Naive thymus-derived CD4-positive, alpha-beta T cell (primary cell): ENCODE measurements at regions of chr4 and their contacts with region 1.

Region 1: DNA sequence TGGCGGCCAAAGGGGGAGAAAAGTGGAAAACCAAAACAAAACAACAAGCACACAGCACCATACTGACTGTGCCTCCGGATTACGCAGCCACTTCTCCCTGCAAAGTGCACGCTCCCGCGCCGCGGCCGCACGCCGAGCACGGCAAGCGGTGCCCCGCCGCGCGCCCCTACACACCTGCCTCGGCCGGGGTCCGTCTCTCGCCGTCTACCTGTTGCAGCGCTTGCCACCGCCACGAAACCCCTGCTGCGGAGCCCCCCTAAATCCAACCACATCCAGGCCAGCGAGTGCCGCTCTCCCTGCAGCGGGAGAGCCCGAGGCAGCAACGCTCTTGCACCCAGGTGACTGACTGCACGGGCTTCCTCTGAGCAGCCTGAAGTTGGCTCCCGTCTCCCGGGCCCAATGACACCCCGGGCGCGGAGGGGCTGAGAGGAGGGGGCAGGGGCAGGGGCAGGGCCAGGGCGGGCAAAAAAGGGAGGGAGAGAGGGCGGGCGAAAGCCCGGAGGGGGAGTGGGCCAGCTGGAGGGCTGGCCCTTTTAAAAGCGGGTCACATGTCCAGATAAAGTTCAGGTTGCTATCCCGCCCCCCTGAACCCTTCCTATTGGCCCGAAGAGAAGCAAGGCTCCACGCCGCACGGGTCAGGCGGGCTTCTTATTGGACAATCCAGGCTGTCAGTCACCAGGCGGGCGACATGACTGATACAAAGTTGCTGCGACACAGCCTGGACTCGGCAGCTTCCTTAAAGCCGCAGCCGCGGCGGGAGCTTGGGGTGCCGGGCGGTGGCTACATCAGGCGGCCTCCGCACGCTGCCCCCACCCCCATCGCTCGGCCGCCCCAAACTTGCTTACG is at the start of gene NR3C2:
- DNase-seq: peak; percentile 87 to 100 (median 98)
- ATAC-seq: peak; percentile 88
- H3K4me3 ChIP-seq: peak within 1 kb of the TSS; percentile 99
- H3K4me3 Mint-ChIP-seq: peak within 1 kb of the TSS; percentile 90 to 100 (median 98)
- H3K27ac ChIP-seq: peak within 1 kb of the TSS; percentile 93
- H3K27ac Mint-ChIP-seq: peak within 1 kb of the TSS; percentile 94 to 100 (median 98)
- H3K4me1 ChIP-seq: peaks cover 0 to 29% of the 10 kb centered on the region in 2 donors
- H3K4me1 Mint-ChIP-seq: peaks cover 24 to 60% (median 55%) of the 10 kb centered on the region in 7 donors
- H3K27me3 ChIP-seq: no peaks in the 10 kb centered on the region
- H3K27me3 Mint-ChIP-seq: peaks cover 0 to 58% (median 5%) of the 10 kb centered on the region in 5 donors
- total RNA-seq, gene NR3C2: 2.2 to 55.2 (median 49.3) TPM

Region 2: GRCh38 chr4:146522098-146522868 is 1919.9 kb before region 1 on chr4:
- CTCF ChIA-PET with region 1: no interaction called
- POLR2A ChIA-PET with region 1: no interaction called
- intact Hi-C with region 1: loop called in 1 of 2 experiments (anchors 10 kb)
- DNase-seq: peak; percentile 63 to 83 (median 76)
- ATAC-seq: peak; percentile 93
- H3K4me3 ChIP-seq: peak overlapping the region; percentile 95
- H3K4me3 Mint-ChIP-seq: no peak overlapping the region
- H3K27ac ChIP-seq: peak overlapping the region; percentile 85
- H3K27ac Mint-ChIP-seq: peak overlapping the region in 2 of 9 donors; percentile 58 to 69
- H3K4me1 ChIP-seq: peaks cover 13 to 24% of the 10 kb centered on the region in 2 donors
- H3K4me1 Mint-ChIP-seq: peaks cover 17 to 37% (median 31%) of the 10 kb centered on the region in 7 donors
- H3K27me3 ChIP-seq: no peaks in the 10 kb centered on the region
- H3K27me3 Mint-ChIP-seq: peaks cover 0 to 7% (median 0%) of the 10 kb centered on the region in 5 donors

Region 3: GRCh38 chr4:147683717-147684700 is 758.2 kb before region 1 on chr4 and contains the start of gene PRMT9:
- CTCF ChIA-PET with region 1: no interaction called
- POLR2A ChIA-PET with region 1: interaction called, 12 read pairs
- intact Hi-C with region 1: loop called (anchors 1 kb)
- DNase-seq: peak; percentile 79 to 90 (median 85)
- ATAC-seq: peak; percentile 98
- H3K4me3 ChIP-seq: peak within 1 kb of the TSS; percentile 97
- H3K4me3 Mint-ChIP-seq: peak within 1 kb of the TSS; percentile 89 to 100 (median 97)
- H3K27ac ChIP-seq: peak within 1 kb of the TSS; percentile 95
- H3K27ac Mint-ChIP-seq: peak within 1 kb of the TSS; percentile 86 to 99 (median 97)
- H3K4me1 ChIP-seq: peaks cover 4 to 16% of the 10 kb centered on the region in 2 donors
- H3K4me1 Mint-ChIP-seq: peaks cover 15 to 47% (median 38%) of the 10 kb centered on the region in 7 donors
- H3K27me3 ChIP-seq: no peaks in the 10 kb centered on the region
- H3K27me3 Mint-ChIP-seq: peaks cover 0 to 11% (median 2%) of the 10 kb centered on the region in 5 donors
- total RNA-seq, gene PRMT9: 9.7 to 15.9 (median 10.8) TPM

Region 4: DNA sequence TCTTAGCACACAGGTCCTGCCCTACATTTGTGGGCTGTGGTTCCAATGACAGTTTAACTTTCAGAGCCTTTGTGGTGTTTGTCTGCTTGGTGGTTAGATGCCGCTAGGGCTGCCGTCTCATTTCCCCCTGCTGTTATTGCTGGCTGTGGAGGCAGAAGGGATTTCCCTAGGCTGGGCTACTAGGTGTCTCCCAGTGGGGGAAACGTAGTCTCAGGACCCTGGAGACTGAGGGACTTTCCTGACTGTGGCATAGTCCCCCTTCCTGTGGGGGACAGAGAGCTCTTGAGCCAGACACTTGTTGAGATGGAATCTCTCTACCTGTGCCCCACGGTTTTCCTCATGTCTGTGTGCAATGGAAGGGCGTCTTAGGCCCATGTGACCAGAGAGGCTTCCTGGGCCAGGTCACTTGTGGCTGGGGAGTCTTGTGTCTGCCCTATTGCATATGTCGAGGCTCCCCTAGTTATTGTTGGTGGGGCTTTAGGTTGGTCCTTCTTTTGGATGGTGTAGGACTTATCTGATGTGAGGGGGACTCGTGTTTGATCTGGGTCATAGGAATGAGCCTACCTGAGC is 642.1 kb before region 1 on chr4:
- CTCF ChIA-PET with region 1: no interaction called
- POLR2A ChIA-PET with region 1: no interaction called
- intact Hi-C with region 1: loop called in 1 of 2 experiments (anchors 5 kb)
- DNase-seq: peak in 8 of 9 donors; percentile 5 to 64 (median 24)
- ATAC-seq: peak; percentile 95
- H3K4me3 ChIP-seq: no peak overlapping the region
- H3K4me3 Mint-ChIP-seq: peak overlapping the region in 2 of 10 donors; percentile 40 to 81
- H3K27ac ChIP-seq: no peak overlapping the region
- H3K27ac Mint-ChIP-seq: peak overlapping the region in 5 of 9 donors; percentile 22 to 79 (median 45)
- H3K4me1 ChIP-seq: peaks cover 7 to 15% of the 10 kb centered on the region in 2 donors
- H3K4me1 Mint-ChIP-seq: peaks cover 9 to 53% (median 12%) of the 10 kb centered on the region in 7 donors
- H3K27me3 ChIP-seq: no peaks in the 10 kb centered on the region
- H3K27me3 Mint-ChIP-seq: peaks cover 3 to 27% (median 7%) of the 10 kb centered on the region in 5 donors

Region 5: DNA sequence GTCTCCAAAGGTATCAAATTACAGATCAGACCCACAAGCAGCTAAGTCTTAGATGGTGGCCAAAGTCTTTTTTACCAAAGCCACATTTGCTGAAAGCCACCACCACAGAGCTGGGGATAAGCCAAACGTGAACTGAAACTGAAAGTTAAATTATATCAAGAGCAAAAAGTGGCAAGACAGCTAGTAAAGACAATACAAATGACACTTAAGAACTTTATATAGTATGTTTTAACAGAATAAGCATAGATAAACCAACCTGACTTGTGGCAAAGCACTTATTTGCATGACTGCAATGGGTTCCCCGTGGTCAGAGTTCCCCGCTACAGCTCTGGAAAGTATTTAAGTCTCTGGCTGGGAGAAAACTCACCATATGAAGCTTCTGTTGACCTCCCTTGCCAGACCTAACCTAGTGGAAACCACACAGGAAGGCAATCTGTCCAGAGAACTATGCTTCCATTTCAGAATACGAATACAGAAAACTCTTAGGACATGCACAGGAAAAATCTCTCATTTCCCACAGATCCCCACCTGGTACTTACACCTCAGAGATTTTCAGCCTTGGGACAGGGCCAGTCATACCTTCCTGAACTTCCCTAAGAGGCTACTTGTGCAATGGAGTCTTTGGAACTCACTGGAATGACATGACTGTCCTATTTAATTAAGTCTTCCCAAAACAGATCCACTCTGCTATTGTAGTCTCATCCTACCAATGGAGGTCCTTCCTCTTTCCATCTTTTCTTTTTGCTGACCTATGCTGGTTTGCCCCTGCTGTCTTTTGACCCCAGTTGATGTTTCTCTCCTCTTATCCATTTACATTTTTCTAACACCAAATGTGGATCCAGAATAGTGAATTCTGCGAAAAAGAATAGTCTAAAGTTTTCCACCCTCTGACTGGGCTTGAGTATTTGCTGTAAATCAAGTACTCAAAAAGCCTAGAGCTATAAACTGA is 225.1 kb before region 1 on chr4:
- CTCF ChIA-PET with region 1: interaction called, 3 read pairs
- POLR2A ChIA-PET with region 1: no interaction called
- intact Hi-C with region 1: loop called in 1 of 2 experiments (anchors 5 kb)
- DNase-seq: peak in 5 of 9 donors; percentile 11 to 33 (median 25)
- ATAC-seq: peak; percentile 67
- H3K4me3 ChIP-seq: peak overlapping the region; percentile 43
- H3K4me3 Mint-ChIP-seq: peak overlapping the region; percentile 63 to 82 (median 78)
- H3K27ac ChIP-seq: peak overlapping the region; percentile 32
- H3K27ac Mint-ChIP-seq: peak overlapping the region; percentile 41 to 90 (median 57)
- H3K4me1 ChIP-seq: peaks cover 11 to 15% of the 10 kb centered on the region in 2 donors
- H3K4me1 Mint-ChIP-seq: peaks cover 14 to 63% (median 42%) of the 10 kb centered on the region in 7 donors
- H3K27me3 ChIP-seq: no peaks in the 10 kb centered on the region
- H3K27me3 Mint-ChIP-seq: no peaks in the 10 kb centered on the region

Region 6: GRCh38 chr4:148355442-148356123 is 86.6 kb before region 1 on chr4:
- CTCF ChIA-PET with region 1: no interaction called
- POLR2A ChIA-PET with region 1: interaction called, 13 read pairs
- intact Hi-C with region 1: no loop called
- DNase-seq: no peak
- ATAC-seq: no peak
- H3K4me3 ChIP-seq: no peak overlapping the region
- H3K4me3 Mint-ChIP-seq: peak overlapping the region in 7 of 10 donors; percentile 14 to 54 (median 29)
- H3K27ac ChIP-seq: no peak overlapping the region
- H3K27ac Mint-ChIP-seq: peak overlapping the region in 5 of 9 donors; percentile 45 to 87 (median 56)
- H3K4me1 ChIP-seq: peaks cover 8 to 16% of the 10 kb centered on the region in 2 donors
- H3K4me1 Mint-ChIP-seq: peaks cover 9 to 73% (median 51%) of the 10 kb centered on the region in 7 donors
- H3K27me3 ChIP-seq: no peaks in the 10 kb centered on the region
- H3K27me3 Mint-ChIP-seq: no peaks in the 10 kb centered on the region

Region 7: GRCh38 chr4:148415500-148415899 is 26.7 kb before region 1 on chr4:
- CTCF ChIA-PET with region 1: no interaction called
- POLR2A ChIA-PET with region 1: interaction called, 21 read pairs
- intact Hi-C with region 1: no loop called
- DNase-seq: no peak
- ATAC-seq: no peak
- H3K4me3 ChIP-seq: no peak overlapping the region
- H3K4me3 Mint-ChIP-seq: peak overlapping the region in 2 of 10 donors; percentile 2 to 30
- H3K27ac ChIP-seq: no peak overlapping the region
- H3K27ac Mint-ChIP-seq: no peak overlapping the region
- H3K4me1 ChIP-seq: peaks cover 0 to 7% of the 10 kb centered on the region in 2 donors
- H3K4me1 Mint-ChIP-seq: peaks cover 0 to 92% (median 75%) of the 10 kb centered on the region in 7 donors
- H3K27me3 ChIP-seq: no peaks in the 10 kb centered on the region
- H3K27me3 Mint-ChIP-seq: no peaks in the 10 kb centered on the region

Region 8: GRCh38 chr4:148893095-148893494 is 450.9 kb after region 1 on chr4:
- CTCF ChIA-PET with region 1: no interaction called
- POLR2A ChIA-PET with region 1: no interaction called
- intact Hi-C with region 1: no loop called
- DNase-seq: no peak
- ATAC-seq: no peak
- H3K4me3 ChIP-seq: no peak overlapping the region
- H3K4me3 Mint-ChIP-seq: no peak overlapping the region
- H3K27ac ChIP-seq: no peak overlapping the region
- H3K27ac Mint-ChIP-seq: no peak overlapping the region
- H3K4me1 ChIP-seq: no peaks in the 10 kb centered on the region
- H3K4me1 Mint-ChIP-seq: no peaks in the 10 kb centered on the region
- H3K27me3 ChIP-seq: no peaks in the 10 kb centered on the region
- H3K27me3 Mint-ChIP-seq: peaks cover 0 to 16% (median 0%) of the 10 kb centered on the region in 5 donors